MCF 10A (cell line): ENCODE measurements at regions of chr3 and their contacts with region 1.

Region 1: GRCh38 chr3:27721717-27722542 is at the start of gene EOMES:
- DNase-seq: peak; percentile 70
- H3K4me3 Mint-ChIP-seq: peak within 1 kb of the TSS; percentile 75
- H3K27ac Mint-ChIP-seq: no peak within 1 kb of the TSS
- H3K4me1 Mint-ChIP-seq: no peaks in the 10 kb centered on the region
- H3K27me3 Mint-ChIP-seq: no peaks in the 10 kb centered on the region
- CTCF ChIP-seq: peak; percentile 82
- total RNA-seq, gene EOMES: 0.74 and 1.3 TPM in 2 replicates

Region 2: GRCh38 chr3:27746838-27747237 is 24.9 kb after region 1 on chr3:
- CTCF ChIA-PET with region 1: interaction called, 14 read pairs
- POLR2A ChIA-PET with region 1: no interaction called
- intact Hi-C with region 1: no loop called
- DNase-seq: no peak
- H3K4me3 Mint-ChIP-seq: no peak overlapping the region
- H3K27ac Mint-ChIP-seq: no peak overlapping the region
- H3K4me1 Mint-ChIP-seq: peaks cover 13% of the 10 kb centered on the region
- H3K27me3 Mint-ChIP-seq: no peaks in the 10 kb centered on the region
- CTCF ChIP-seq: no peak

Region 3: DNA sequence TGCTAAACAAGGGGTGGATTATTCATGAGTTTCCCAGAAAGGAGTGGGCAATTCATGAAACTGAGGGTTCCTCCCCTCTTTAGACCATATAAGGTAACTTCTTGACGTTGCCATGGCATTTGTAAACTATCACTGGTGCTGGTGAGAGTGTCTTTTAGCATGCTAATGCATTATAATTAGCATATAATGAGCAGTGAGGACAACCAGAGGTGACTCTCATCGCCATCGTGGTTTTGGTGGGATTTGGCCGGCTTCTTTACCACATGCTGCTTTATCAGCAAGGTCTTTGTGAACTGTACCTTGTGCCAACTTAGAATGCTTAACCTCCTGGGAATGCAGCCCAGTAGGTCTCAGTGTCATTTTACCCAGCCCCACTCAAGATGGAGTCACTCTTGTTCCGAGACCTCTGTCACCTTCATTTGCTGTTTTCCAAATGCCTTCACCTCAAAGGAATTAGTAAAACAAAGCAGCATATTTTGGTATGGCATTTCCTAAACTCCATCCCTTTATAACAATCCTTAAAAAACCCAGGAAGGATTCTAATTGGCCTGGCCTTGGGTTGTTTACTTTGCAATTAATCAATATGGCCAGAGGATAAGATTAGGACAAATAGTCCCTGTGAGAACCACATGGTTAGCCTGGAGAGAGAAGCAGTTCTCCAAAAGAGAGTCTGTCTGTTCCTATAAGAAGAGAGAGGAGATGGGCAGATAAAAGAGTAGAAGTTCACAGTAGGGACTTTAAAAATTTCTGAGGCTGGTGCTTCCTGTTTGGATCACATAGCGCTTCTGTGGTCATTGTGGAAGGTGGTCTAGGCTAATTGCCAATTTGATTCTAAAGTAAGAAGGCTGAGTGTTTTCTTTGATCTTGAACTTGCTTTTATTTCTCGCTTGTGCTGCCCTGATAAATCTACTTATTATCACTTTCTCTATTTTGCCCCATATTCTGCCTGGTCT is 155.4 kb after region 1 on chr3:
- CTCF ChIA-PET with region 1: no interaction called
- POLR2A ChIA-PET with region 1: no interaction called
- intact Hi-C with region 1: no loop called
- DNase-seq: no peak
- H3K4me3 Mint-ChIP-seq: no peak overlapping the region
- H3K27ac Mint-ChIP-seq: no peak overlapping the region
- H3K4me1 Mint-ChIP-seq: no peaks in the 10 kb centered on the region
- H3K27me3 Mint-ChIP-seq: no peaks in the 10 kb centered on the region
- CTCF ChIP-seq: no peak

Region 4: GRCh38 chr3:28089527-28089897 is 367.6 kb after region 1 on chr3:
- CTCF ChIA-PET with region 1: interaction called, 7 read pairs
- POLR2A ChIA-PET with region 1: no interaction called
- intact Hi-C with region 1: loop called (anchors 2 kb)
- DNase-seq: no peak
- H3K4me3 Mint-ChIP-seq: no peak overlapping the region
- H3K27ac Mint-ChIP-seq: no peak overlapping the region
- H3K4me1 Mint-ChIP-seq: no peaks in the 10 kb centered on the region
- H3K27me3 Mint-ChIP-seq: no peaks in the 10 kb centered on the region
- CTCF ChIP-seq: no peak

Region 5: DNA sequence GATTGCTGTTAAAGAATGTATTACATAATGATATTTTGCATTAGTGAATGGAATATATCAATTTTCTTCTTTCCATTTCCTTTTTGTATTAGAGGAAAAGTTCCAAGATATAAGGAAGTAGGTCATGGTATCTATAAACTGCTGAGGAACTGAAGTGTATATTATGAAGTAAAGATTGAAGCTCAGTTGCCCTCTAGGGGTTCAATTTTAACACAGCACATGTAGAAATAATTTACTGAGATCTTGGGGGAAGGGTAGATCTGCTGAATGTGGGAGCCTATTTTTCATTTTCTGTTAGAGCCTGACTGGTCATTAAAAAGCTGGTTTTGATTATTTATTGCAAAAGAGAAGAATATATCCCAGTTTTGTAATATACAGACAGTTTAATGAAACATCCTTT is 564.7 kb after region 1 on chr3:
- CTCF ChIA-PET with region 1: interaction called, 70 read pairs
- POLR2A ChIA-PET with region 1: interaction called, 17 read pairs
- intact Hi-C with region 1: loop called (anchors 1 kb)
- DNase-seq: peak; percentile 52
- H3K4me3 Mint-ChIP-seq: no peak overlapping the region
- H3K27ac Mint-ChIP-seq: no peak overlapping the region
- H3K4me1 Mint-ChIP-seq: peaks cover 13% of the 10 kb centered on the region
- H3K27me3 Mint-ChIP-seq: no peaks in the 10 kb centered on the region
- CTCF ChIP-seq: peak; percentile 39